Activated naive CD4-positive, alpha-beta T cell treated with anti-CD3 and anti-CD28 coated beads for 36 hours (primary cell): ENCODE measurements at regions of chr16 and their contacts with region 1.

Region 1: GRCh38 chr16:30407102-30407803 is at the start of gene ZNF771:
- DNase-seq: peak; percentile 91
- H3K4me3 Mint-ChIP-seq: peak within 1 kb of the TSS; percentile 98
- H3K27ac Mint-ChIP-seq: peak within 1 kb of the TSS; percentile 93
- H3K4me1 Mint-ChIP-seq: peaks cover 32% of the 10 kb centered on the region
- H3K27me3 Mint-ChIP-seq: no peaks in the 10 kb centered on the region
- total RNA-seq, gene ZNF771: 3.4 to 4.7 TPM

Region 2: GRCh38 chr16:30112197-30113030 is 294.8 kb before region 1 on chr16:
- CTCF ChIA-PET with region 1: interaction called, 6 read pairs
- intact Hi-C with region 1: loop called (anchors 1 kb)
- DNase-seq: peak; percentile 78
- H3K4me3 Mint-ChIP-seq: no peak overlapping the region
- H3K27ac Mint-ChIP-seq: peak overlapping the region; percentile 46
- H3K4me1 Mint-ChIP-seq: peaks cover 14% of the 10 kb centered on the region
- H3K27me3 Mint-ChIP-seq: no peaks in the 10 kb centered on the region

Region 3: GRCh38 chr16:30335598-30336474 is 71.4 kb before region 1 on chr16:
- CTCF ChIA-PET with region 1: no interaction called
- intact Hi-C with region 1: loop called (anchors 2 kb)
- DNase-seq: peak; percentile 63
- H3K4me3 Mint-ChIP-seq: peak overlapping the region; percentile 78
- H3K27ac Mint-ChIP-seq: peak overlapping the region; percentile 59
- H3K4me1 Mint-ChIP-seq: peaks cover 26% of the 10 kb centered on the region
- H3K27me3 Mint-ChIP-seq: no peaks in the 10 kb centered on the region

Region 4: GRCh38 chr16:30370444-30371247 is 36.6 kb before region 1 on chr16 and contains the start of gene TBC1D10B:
- CTCF ChIA-PET with region 1: interaction called, 10 read pairs
- intact Hi-C with region 1: loop called (anchors 1 kb)
- DNase-seq: peak; percentile 100
- H3K4me3 Mint-ChIP-seq: peak within 1 kb of the TSS; percentile 94
- H3K27ac Mint-ChIP-seq: peak within 1 kb of the TSS; percentile 98
- H3K4me1 Mint-ChIP-seq: peaks cover 40% of the 10 kb centered on the region
- H3K27me3 Mint-ChIP-seq: no peaks in the 10 kb centered on the region
- total RNA-seq, gene TBC1D10B: 36.6 to 38.4 TPM

Region 5: DNA sequence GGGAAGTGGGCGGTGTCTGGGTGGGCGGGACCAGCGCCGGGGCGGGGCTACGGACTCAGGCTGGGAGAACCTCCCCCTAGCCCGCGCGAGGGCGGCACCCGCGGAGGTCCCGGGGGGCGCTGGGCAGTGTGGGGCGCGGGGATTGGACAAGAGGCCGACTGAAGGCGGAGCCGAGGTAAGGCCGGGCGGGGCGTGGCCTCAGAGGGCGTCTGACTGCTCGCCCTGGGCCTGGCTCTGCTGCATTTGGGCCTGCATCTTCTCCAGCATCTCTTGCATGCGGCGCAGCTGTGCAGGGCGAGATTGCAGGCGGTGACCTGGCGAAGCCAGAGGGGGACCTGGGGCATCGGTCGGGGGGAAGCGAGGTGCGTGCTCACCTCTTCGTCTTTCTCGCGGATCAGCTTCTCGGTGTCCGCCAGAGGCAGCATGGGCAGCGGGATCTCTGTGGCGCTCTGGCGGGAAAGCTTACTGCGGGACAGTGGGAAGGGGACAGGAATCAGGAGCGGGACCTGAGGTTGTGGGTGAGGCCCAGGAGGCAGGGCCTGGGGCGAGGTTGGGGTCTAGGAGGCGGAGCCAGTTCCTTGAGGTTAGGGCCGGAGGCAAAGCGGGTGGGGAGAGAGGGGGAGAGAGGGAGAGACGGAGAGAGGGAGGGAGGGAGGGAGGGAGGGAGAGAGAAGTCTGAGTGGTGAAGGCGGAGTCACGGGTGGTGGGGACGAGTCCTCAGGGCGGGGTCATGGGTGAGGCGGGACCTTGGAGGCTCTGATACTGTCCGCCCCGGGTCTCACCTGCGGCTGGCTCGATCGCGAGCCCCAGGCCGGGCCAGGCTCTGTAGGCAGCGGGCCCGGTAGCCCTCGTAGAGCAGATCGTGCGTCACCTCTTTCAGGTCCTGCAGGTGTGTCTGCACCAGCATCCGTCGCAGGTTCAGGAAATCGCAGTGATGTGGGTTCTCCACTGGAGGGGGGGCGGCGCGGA is 28.7 kb before region 1 on chr16:
- CTCF ChIA-PET with region 1: interaction called, 27 read pairs
- intact Hi-C with region 1: loop called (anchors 1 kb)
- DNase-seq: peak; percentile 100
- H3K4me3 Mint-ChIP-seq: peak overlapping the region; percentile 99
- H3K27ac Mint-ChIP-seq: peak overlapping the region; percentile 99
- H3K4me1 Mint-ChIP-seq: peaks cover 43% of the 10 kb centered on the region
- H3K27me3 Mint-ChIP-seq: no peaks in the 10 kb centered on the region

Region 6: DNA sequence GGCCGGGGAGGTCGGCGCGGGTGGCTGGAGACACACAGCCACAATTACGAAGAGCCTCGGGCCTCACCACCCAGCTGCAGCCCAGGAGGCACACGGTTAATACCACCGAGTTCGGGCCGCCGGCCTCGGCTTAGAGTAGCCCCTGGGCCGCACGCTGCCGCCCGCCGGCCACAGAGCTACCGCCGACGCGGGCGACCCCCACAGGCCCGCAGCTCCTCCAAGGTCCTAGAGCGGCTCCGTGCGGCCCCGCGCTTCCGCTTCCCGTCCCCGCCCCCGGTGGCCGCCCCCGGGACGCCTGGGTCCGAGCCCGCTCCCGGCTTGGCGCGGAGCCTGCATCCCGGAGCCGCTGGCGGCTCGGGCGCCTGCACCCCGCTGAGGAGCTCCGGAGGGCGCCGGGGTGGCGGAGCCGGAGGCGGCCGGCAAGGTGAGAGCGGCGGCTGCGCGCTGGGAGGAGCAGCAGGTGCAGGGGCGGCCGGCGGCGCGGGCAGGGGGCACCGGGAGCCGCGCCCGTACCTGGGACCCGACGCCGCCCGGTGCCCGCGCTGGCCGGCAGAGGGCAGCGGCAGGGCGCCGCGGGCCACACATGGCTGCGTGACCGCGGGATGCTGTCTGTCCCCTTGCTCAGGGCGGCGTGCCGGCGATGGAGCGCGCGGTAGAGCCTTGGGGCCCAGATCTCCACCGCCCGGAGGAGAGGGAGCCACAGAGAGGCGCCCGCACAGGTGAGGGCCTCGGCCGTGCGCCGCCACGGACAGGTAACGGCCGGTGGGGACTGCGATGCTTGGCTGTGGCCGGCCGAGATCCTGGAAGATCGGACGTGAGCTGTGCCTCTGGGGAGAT is 11.9 kb before region 1 on chr16 and contains the start of gene ZNF48:
- CTCF ChIA-PET with region 1: interaction called, 12 read pairs
- intact Hi-C with region 1: loop called (anchors 1 kb)
- DNase-seq: peak; percentile 54
- H3K4me3 Mint-ChIP-seq: peak within 1 kb of the TSS; percentile 94
- H3K27ac Mint-ChIP-seq: peak within 1 kb of the TSS; percentile 79
- H3K4me1 Mint-ChIP-seq: peaks cover 32% of the 10 kb centered on the region
- H3K27me3 Mint-ChIP-seq: no peaks in the 10 kb centered on the region
- total RNA-seq, gene ZNF48: 5.3 to 6.0 TPM

Region 7: DNA sequence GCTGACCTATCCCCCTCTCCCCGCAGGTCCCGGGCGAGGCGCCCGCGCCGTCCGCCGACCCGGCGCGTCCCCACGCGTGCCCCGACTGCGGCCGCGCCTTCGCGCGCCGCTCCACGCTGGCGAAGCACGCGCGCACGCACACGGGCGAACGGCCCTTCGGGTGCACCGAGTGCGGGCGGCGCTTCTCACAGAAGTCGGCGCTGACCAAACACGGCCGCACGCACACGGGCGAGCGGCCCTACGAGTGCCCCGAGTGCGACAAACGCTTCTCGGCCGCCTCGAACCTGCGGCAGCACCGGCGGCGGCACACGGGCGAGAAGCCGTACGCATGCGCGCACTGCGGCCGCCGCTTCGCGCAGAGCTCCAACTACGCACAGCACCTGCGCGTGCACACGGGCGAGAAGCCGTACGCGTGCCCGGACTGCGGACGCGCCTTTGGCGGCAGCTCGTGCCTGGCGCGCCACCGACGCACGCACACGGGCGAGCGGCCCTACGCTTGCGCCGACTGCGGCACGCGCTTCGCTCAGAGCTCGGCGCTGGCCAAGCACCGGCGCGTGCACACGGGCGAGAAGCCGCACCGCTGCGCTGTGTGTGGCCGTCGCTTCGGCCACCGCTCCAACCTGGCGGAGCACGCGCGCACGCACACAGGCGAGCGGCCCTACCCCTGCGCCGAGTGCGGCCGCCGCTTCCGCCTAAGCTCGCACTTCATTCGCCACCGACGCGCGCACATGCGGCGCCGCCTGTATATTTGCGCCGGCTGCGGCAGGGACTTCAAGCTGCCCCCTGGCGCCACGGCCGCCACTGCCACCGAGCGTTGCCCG is 10.5 kb after region 1 on chr16:
- CTCF ChIA-PET with region 1: interaction called, 27 read pairs
- intact Hi-C with region 1: no loop called
- DNase-seq: peak; percentile 85
- H3K4me3 Mint-ChIP-seq: peak overlapping the region; percentile 52
- H3K27ac Mint-ChIP-seq: no peak overlapping the region
- H3K4me1 Mint-ChIP-seq: peaks cover 31% of the 10 kb centered on the region
- H3K27me3 Mint-ChIP-seq: no peaks in the 10 kb centered on the region